Motor neuron (in vitro differentiated cells): ENCODE measurements at regions of chr2 and their contacts with region 1.

Region 1: GRCh38 chr2:113148606-113149560 is 21.5 kb downstream of the IL1RN start:
- ATAC-seq: no peak
- H3K4me3 ChIP-seq: no peak overlapping the region
- H3K27ac ChIP-seq: no peak overlapping the region
- H3K4me1 ChIP-seq: no peaks in the 10 kb centered on the region

Region 2: DNA sequence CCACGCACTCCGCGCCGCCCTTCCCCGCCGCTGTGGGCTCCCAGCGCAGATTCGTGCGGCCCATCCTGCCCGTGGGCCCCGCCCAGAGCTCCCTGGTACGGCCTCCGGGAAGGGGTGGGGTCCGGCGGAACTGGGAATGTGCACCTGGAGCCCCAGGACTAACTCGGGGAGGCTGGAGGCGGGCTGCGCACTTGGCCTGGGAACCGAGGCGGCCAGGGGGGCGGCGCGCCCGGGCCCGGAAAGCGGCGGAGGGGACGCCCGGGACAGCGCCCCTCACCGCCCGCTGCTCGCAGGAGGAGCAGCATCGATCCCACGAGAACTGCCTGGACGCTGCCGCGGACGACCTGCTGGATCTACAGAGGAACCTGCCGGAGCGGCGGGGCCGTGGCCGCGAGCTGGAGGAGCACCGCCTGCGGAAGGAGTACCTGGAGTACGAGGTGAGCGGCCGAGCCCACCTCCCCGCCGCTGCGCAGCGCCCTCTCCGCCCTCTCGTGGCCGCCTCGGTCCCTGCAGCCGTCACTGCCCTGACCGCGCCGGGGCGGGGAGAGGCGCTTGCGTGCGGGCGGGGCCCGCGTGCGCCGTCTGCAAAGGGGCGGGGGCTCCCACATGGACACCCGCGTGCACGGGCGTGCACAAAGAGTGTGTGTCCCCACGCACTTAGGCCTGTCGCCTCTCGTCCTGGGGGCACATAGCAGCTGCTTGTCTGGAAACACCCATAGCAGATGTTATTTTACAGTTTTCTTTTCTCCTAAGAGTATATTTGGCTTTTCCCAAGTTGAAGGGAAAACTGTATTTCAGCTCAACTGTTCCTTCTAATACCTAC is 50.1 kb after region 1 on chr2:
- in situ Hi-C with region 1: loop called in 1 of 9 experiments (anchors 10 kb)
- ATAC-seq: peak; percentile 74 to 93 (median 90)
- H3K4me3 ChIP-seq: peak overlapping the region; percentile 49 to 61 (median 59)
- H3K27ac ChIP-seq: no peak overlapping the region
- H3K4me1 ChIP-seq: peaks cover 0 to 10% of the 10 kb centered on the region in 2 donors